ENCODE measurements at regions of chr19 and their contacts with region 1.

Region 1: DNA sequence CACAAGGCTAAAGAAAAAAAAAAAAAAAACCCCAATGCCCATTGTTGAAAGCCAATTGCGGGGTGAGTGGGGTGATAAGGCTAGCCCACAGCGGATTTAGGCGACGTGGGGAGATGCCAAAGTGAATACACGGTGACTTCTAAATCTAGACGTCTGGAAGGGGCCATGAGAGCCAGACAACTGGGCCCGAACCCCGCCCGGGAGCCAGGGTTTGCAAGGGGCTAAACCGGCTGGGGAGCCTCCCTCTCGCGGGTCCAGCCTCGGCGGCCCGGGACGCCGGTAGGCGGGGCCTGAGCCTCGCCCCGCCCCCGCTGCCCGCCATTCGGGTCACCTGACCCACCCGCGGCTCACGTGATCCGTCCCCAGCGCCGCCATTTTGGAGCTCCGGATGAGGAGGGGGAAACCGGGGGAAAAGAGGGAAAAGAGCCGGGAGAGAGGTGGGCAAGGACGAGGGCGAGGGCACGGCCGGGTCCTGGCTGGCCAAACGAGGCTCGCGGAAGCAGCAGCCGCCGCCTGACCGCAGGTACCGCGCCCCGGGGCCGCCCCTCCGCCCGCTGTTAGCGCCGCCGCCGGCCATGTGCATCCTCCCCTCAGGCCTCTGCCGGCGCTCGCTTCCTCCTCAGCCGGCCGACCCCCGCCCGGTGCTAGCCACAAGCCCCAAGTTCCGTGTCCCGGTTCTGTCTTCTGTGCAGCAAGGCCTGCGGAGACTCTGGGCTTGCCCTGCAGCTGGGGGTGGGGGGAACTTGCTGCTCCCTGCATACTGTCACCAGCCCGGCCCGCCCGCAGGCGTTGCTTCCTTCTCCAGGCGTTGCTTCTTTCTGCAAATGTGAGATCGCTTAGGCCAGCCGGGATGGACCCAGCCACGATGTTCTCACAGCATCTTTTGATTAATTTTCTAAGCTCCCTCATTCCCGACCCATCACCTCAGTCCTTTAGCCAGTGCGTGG is at the start of gene ZNF507:
- DNase-seq: peak; percentile 92
- ATAC-seq: peak; percentile 97
- H3K4me3 ChIP-seq: peak within 1 kb of the TSS; percentile 93
- H3K27ac ChIP-seq: peak within 1 kb of the TSS; percentile 89
- H3K4me1 ChIP-seq: peaks cover 19% of the 10 kb centered on the region
- H3K27me3 ChIP-seq: peaks cover 7% of the 10 kb centered on the region
- CTCF ChIP-seq: no peak
- total RNA-seq, gene ZNF507: 22.3 TPM

Region 2: DNA sequence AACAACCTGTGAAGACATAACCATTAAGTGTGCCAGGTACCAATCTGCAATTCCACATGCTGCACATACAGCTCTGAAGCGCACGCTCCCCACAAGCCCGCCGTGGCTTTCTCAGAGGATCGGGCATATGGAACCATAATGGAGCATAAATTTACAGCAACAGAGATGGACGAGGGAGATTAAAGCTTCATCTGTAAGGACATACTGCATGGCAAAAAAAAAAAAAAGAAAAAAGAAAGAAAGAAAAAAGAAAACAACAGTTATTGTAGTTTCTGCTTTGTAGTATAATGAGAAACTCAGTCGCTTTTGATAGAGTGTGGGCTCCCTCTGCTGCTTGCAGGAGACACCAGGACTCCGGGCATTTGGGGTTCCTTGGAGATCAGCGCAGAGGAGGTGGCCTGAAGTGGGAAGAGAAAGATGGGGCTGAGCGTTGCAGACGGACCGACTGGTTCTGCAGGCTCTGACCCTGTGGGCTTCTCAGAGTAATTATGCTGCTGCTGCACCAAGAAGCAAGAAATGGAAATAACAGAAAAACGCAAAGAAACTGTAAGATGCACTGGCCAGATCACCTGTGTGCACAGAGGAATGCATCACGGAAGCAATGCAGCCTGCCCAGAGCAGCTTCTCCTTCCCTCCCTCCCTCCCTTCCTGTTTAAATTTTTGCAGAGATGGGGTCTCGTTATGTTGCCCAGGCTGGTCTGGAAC is 224.7 kb after region 1 on chr19:
- intact Hi-C with region 1: loop called (anchors 10 kb)
- DNase-seq: no peak
- ATAC-seq: peak; percentile 80
- H3K4me3 ChIP-seq: no peak overlapping the region
- H3K27ac ChIP-seq: no peak overlapping the region
- H3K4me1 ChIP-seq: no peaks in the 10 kb centered on the region
- H3K27me3 ChIP-seq: peaks cover 27% of the 10 kb centered on the region
- CTCF ChIP-seq: peak; percentile 53

Measured in upper lobe of right lung (tissue), 1 donor.